K562 (cell line): ENCODE measurements at regions of chr11 and their contacts with region 1.

Region 1: DNA sequence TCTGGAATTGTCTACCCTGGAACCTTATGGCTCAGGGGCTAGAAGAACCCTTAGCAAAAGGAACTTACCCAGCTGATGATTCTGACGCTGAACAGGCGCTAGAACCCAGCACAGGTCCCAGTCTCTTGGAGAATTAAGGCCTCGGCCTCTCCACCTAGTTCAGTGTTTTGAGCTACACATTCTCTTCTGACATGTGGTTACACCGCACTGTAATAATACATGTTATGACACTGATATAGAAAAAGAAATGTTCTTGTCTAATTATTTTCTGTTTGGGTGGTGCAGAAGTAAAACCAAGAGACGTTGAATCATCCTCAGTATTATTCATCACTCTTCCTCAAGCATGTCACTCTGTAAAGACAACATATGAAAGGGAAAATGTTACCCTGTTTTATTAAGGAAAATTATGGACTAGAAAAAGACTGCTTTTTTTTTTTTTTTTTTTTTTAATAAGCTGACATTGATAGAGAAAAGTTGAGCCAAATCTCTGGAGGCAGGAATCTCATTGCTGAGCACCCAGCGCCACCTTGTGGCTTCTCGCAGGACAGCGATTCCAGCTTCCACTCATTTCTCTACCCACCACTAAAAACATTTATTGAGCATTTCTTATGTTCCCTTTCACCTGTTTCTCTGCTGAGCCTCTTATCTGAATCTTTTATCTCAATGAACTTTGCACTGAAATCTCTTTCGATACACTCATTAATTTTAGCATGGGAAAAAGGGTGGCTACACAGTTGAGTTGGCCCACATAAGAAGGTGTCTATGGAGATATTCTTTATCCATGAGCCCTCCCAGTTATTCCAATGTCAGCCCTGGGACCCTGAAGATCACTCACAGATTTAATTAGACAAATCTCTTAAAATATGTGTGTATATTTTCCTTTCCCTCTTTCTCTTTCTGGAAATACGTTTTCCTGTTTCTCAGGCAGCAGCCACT is 12.6 kb upstream of the APLNR start:
- DNase-seq: peak; percentile 58 to 78 (median 64)
- ATAC-seq: peak; percentile 77
- H3K4me3 ChIP-seq: no peak overlapping the region
- H3K27ac ChIP-seq: no peak overlapping the region
- H3K4me1 ChIP-seq: peaks cover 6 to 17% of the 10 kb centered on the region in 2 experiments; a peak in 3 of 5 replicates
- H3K27me3 ChIP-seq: no peaks in the 10 kb centered on the region; a peak in 1 of 5 replicates
- CTCF ChIP-seq: peak; percentile 82 to 93 (median 83)
- EP300 ChIP-seq: no peak
- POLR2A ChIP-seq: no peak
- RAD21 ChIP-seq: peak; percentile 85 to 87

Region 2: GRCh38 chr11:55942785-55943392 is 1306.8 kb before region 1 on chr11:
- CTCF ChIA-PET with region 1: interaction called, 5 read pairs
- POLR2A ChIA-PET with region 1: no interaction called
- in situ Hi-C with region 1: loop called (anchors 25 kb)
- intact Hi-C with region 1: loop called (anchors 10 kb)
- DNase-seq: peak; percentile 4 to 28 (median 5)
- ATAC-seq: no peak
- H3K4me3 ChIP-seq: no peak overlapping the region
- H3K27ac ChIP-seq: no peak overlapping the region
- H3K4me1 ChIP-seq: no peaks in the 10 kb centered on the region
- H3K27me3 ChIP-seq: no peaks in the 10 kb centered on the region
- CTCF ChIP-seq: peak; percentile 3 to 43 (median 14); a peak in 2 of 6 replicates
- EP300 ChIP-seq: no peak
- POLR2A ChIP-seq: no peak
- RAD21 ChIP-seq: peak; percentile 58 to 62

Region 3: GRCh38 chr11:56950510-56950909 is 299.1 kb before region 1 on chr11:
- CTCF ChIA-PET with region 1: no interaction called
- POLR2A ChIA-PET with region 1: no interaction called
- in situ Hi-C with region 1: no loop called
- intact Hi-C with region 1: no loop called
- DNase-seq: no peak
- ATAC-seq: no peak
- H3K4me3 ChIP-seq: no peak overlapping the region
- H3K27ac ChIP-seq: no peak overlapping the region
- H3K4me1 ChIP-seq: no peaks in the 10 kb centered on the region
- H3K27me3 ChIP-seq: no peaks in the 10 kb centered on the region
- CTCF ChIP-seq: no peak
- EP300 ChIP-seq: no peak
- POLR2A ChIP-seq: no peak
- RAD21 ChIP-seq: no peak

Region 4: GRCh38 chr11:57001674-57002401 is 247.8 kb before region 1 on chr11:
- CTCF ChIA-PET with region 1: interaction called, 3 read pairs
- POLR2A ChIA-PET with region 1: no interaction called
- in situ Hi-C with region 1: loop called (anchors 10 kb)
- intact Hi-C with region 1: loop called (anchors 1 kb)
- DNase-seq: peak; percentile 28 to 41 (median 32)
- ATAC-seq: peak; percentile 88
- H3K4me3 ChIP-seq: no peak overlapping the region
- H3K27ac ChIP-seq: no peak overlapping the region
- H3K4me1 ChIP-seq: no peaks in the 10 kb centered on the region
- H3K27me3 ChIP-seq: no peaks in the 10 kb centered on the region
- CTCF ChIP-seq: peak; percentile 45 to 61 (median 55); a peak in 5 of 6 replicates
- EP300 ChIP-seq: no peak
- POLR2A ChIP-seq: no peak
- RAD21 ChIP-seq: peak in 1 of 2 experiments; percentile 39; a peak in 2 of 4 replicates

Region 5: GRCh38 chr11:57131080-57131790 is 118.4 kb before region 1 on chr11:
- CTCF ChIA-PET with region 1: interaction called, 58 read pairs
- POLR2A ChIA-PET with region 1: interaction called, 4 read pairs
- in situ Hi-C with region 1: loop called (anchors 5 kb)
- intact Hi-C with region 1: loop called (anchors 1 kb)
- DNase-seq: peak; percentile 24 to 68 (median 32)
- ATAC-seq: peak; percentile 81
- H3K4me3 ChIP-seq: no peak overlapping the region
- H3K27ac ChIP-seq: no peak overlapping the region
- H3K4me1 ChIP-seq: peaks cover 0 to 16% of the 10 kb centered on the region in 2 experiments; a peak in 3 of 5 replicates
- H3K27me3 ChIP-seq: no peaks in the 10 kb centered on the region
- CTCF ChIP-seq: peak; percentile 80 to 87 (median 87)
- EP300 ChIP-seq: no peak
- POLR2A ChIP-seq: no peak
- RAD21 ChIP-seq: peak; percentile 92

Region 6: GRCh38 chr11:57207168-57207567 is 42.5 kb before region 1 on chr11:
- CTCF ChIA-PET with region 1: no interaction called
- POLR2A ChIA-PET with region 1: interaction called, 6 read pairs
- in situ Hi-C with region 1: no loop called
- intact Hi-C with region 1: loop called (anchors 2 kb)
- DNase-seq: no peak
- ATAC-seq: no peak
- H3K4me3 ChIP-seq: no peak overlapping the region
- H3K27ac ChIP-seq: no peak overlapping the region
- H3K4me1 ChIP-seq: no peaks in the 10 kb centered on the region
- H3K27me3 ChIP-seq: peaks cover 10 to 31% of the 10 kb centered on the region in 2 experiments
- CTCF ChIP-seq: no peak
- EP300 ChIP-seq: no peak
- POLR2A ChIP-seq: no peak
- RAD21 ChIP-seq: no peak